ENCODE measurements at regions of chr15 and their contacts with region 1.

Region 1: GRCh38 chr15:61871926-61872522 is 188.2 kb downstream of the VPS13C start:
- DNase-seq: peak; percentile 8
- CTCF ChIP-seq: peak; percentile 12

Region 2: GRCh38 chr15:62060113-62060895 is 188.3 kb after region 1 on chr15 and contains the start of gene VPS13C:
- in situ Hi-C with region 1: loop called (anchors 10 kb)
- DNase-seq: peak; percentile 94
- CTCF ChIP-seq: peak; percentile 78

Measured in GM13976 (cell line).